ENCODE measurements at regions of chr11 and their contacts with region 1.

Region 1: DNA sequence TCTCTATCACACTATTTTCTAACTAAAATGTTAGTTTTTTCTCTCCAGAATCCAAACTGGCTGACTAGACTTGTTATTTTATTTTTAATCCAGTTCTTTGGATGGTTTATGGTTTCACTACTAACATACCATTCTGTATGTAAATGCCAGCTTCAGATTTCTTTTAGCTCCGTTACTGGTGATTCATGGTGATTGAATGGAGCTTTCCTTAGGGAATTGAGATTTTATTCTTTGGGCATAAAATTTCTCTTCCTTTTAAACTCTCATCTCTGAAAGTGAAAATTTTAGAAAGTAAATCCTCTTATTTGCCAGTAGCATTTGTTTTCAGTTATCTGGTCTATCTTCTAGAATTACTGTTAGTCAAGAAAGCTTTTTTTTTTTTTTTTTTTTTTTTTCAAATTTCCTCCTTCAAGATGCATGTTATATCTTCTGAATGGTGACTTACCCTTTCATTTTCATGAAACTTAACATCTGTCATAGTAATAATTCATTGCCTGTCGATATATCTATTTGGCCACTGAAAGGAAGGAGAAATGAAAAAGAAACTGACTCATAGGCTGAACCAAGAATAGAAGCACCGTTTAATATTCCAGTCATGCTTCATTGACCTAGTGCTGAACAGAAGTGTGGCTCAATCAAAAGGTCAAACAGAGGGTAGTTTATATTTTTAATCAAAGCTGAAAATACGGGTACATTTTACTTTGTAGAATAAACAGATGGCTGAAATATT is 6.4 kb downstream of the ENDOD1 start:
- DNase-seq: peak; percentile 75
- H3K4me3 ChIP-seq: peak overlapping the region; percentile 58
- H3K27ac ChIP-seq: peak overlapping the region; percentile 88
- H3K4me1 ChIP-seq: peaks cover 80% of the 10 kb centered on the region
- CTCF ChIP-seq: no peak

Region 2: DNA sequence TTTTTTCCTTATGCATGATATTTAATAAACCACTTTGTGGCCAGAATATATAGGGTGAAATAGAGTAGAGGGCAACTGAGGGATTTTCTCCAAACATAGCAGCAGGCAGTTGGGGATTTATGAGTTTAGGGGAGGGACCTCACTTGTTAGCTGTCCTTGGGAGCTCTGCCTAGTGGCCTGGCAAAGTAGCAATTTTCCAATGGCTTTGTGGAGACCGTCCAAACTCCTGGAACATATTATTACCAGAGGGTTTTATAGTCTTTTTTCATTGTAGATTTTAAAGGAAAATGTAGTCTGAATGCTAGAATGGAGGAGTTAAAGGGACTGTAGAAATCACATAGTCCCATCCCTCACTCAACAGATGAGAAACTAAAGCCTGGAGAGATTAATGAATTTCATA is 295.6 kb before region 1 on chr11:
- CTCF ChIA-PET with region 1: no interaction called
- POLR2A ChIA-PET with region 1: no interaction called
- intact Hi-C with region 1: no loop called
- DNase-seq: no peak
- H3K4me3 ChIP-seq: no peak overlapping the region
- H3K27ac ChIP-seq: no peak overlapping the region
- H3K4me1 ChIP-seq: no peaks in the 10 kb centered on the region
- CTCF ChIP-seq: no peak

Region 3: DNA sequence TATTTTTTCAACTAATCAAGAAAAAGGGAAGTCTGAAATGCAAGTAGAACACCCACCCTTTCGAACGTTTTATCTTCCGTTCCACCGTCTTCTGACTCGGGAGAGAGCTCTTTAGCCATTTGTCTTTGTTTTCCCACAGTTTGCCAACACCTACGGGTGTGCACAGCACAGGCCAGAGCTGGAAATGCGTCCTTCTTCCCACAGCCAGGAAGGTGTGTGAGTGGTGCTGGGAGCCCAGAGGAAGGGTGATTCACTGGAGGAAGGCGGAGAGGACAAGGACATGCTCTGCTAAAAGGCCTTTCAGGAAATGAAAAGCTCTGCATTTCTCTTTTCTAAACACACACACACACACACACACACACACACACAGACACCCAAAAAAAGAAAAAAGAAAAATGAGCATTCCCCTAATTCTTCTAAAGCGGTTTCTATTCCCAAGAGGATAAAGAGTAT is 12.2 kb after region 1 on chr11:
- CTCF ChIA-PET with region 1: interaction called, 10 read pairs
- POLR2A ChIA-PET with region 1: interaction called, 18 read pairs
- intact Hi-C with region 1: no loop called
- DNase-seq: no peak
- H3K4me3 ChIP-seq: no peak overlapping the region
- H3K27ac ChIP-seq: no peak overlapping the region
- H3K4me1 ChIP-seq: peaks cover 17% of the 10 kb centered on the region
- CTCF ChIP-seq: no peak

Region 4: GRCh38 chr11:96658436-96658835 is 1562.4 kb after region 1 on chr11:
- CTCF ChIA-PET with region 1: no interaction called
- POLR2A ChIA-PET with region 1: no interaction called
- intact Hi-C with region 1: no loop called
- DNase-seq: no peak
- H3K4me3 ChIP-seq: no peak overlapping the region
- H3K27ac ChIP-seq: no peak overlapping the region
- H3K4me1 ChIP-seq: no peaks in the 10 kb centered on the region
- CTCF ChIP-seq: no peak